Activated naive CD4-positive, alpha-beta T cell treated with anti-CD3 and anti-CD28 coated beads for 36 hours (primary cell): ENCODE measurements at regions of chr4 and their contacts with region 1.

Region 1: GRCh38 chr4:67684839-67685531 is 16.0 kb downstream of the UBA6 start:
- DNase-seq: no peak
- H3K4me3 Mint-ChIP-seq: no peak overlapping the region
- H3K27ac Mint-ChIP-seq: peak overlapping the region; percentile 11
- H3K4me1 Mint-ChIP-seq: peaks cover 32% of the 10 kb centered on the region
- H3K27me3 Mint-ChIP-seq: no peaks in the 10 kb centered on the region

Region 2: DNA sequence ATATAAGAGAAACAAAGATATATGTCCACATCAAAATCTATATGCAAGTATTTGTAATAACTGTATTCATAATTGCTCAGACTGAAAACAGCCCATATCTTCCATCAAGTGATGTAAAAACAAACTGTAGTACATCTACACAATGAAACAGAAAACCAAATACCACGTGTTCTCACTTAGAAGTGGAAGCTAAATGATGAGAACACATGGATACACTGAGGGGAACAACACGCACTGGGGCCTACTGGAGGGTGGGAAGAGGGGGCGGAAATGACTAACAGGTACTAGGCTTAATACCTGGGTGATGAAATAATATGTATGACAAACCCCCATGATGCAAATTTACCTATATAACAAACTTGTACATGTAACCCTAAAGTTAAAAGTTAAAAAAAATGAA is 26.7 kb before region 1 on chr4:
- CTCF ChIA-PET with region 1: no interaction called
- intact Hi-C with region 1: loop called (anchors 1 kb)
- DNase-seq: peak; percentile 58
- H3K4me3 Mint-ChIP-seq: no peak overlapping the region
- H3K27ac Mint-ChIP-seq: no peak overlapping the region
- H3K4me1 Mint-ChIP-seq: peaks cover 25% of the 10 kb centered on the region
- H3K27me3 Mint-ChIP-seq: no peaks in the 10 kb centered on the region

Region 3: DNA sequence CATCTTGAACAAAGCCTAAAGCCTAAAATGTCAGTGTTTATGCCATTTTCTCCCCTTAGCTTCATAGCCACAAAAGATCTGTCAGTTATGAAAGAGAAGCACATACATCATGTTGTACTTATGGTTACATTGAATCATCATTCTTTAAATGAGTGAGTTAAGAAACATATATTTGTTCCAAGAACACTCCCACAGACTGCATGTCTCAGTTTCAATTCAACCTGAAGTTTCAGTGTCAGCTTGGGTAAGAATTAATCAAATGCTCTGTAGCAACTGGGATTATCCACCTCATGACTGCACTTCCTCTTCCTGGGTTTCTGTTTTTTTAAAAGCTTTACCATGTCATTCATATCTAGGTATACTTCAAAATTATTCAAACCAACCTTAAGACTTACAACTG is 564.4 kb after region 1 on chr4:
- CTCF ChIA-PET with region 1: no interaction called
- intact Hi-C with region 1: loop called (anchors 1 kb)
- DNase-seq: peak; percentile 25
- H3K4me3 Mint-ChIP-seq: no peak overlapping the region
- H3K27ac Mint-ChIP-seq: peak overlapping the region; percentile 88
- H3K4me1 Mint-ChIP-seq: peaks cover 16% of the 10 kb centered on the region
- H3K27me3 Mint-ChIP-seq: peaks cover 7% of the 10 kb centered on the region